HCT116 (cell line): ENCODE measurements at regions of chr9 and their contacts with region 1.

Region 1: GRCh38 chr9:128927731-128928411 is 7.1 kb downstream of the PHYHD1 start:
- DNase-seq: peak; percentile 42
- ATAC-seq: peak; percentile 93
- H3K4me3 ChIP-seq: no peak overlapping the region
- H3K27ac ChIP-seq: no peak overlapping the region
- H3K4me1 ChIP-seq: peaks cover 4 to 10% of the 10 kb centered on the region in 2 experiments; a peak in 3 of 4 replicates
- H3K27me3 ChIP-seq: no peaks in the 10 kb centered on the region
- CTCF ChIP-seq: peak; percentile 88 to 97 (median 94)
- POLR2A ChIP-seq: no peak
- RAD21 ChIP-seq: peak; percentile 98

Region 2: DNA sequence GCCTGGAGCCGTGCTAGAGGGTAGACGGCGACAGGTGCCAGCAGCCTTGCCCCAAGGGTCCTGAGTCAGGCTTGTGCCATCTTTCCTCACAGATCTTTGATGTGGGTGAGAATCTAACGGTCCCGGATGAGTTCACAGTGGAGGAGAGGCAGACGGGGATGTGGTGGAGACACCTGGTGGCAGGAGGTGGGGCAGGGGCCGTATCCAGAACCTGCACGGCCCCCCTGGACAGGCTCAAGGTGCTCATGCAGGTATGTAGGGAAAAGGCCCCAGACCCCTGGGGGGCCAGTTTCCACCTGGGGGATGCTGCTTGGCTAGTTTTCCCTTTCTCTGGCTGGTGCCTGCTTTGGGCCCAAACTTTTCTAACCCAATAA is 824.3 kb before region 1 on chr9:
- CTCF ChIA-PET with region 1: no interaction called
- POLR2A ChIA-PET with region 1: no interaction called
- RAD21 ChIA-PET with region 1: no interaction called
- intact Hi-C with region 1: no loop called
- DNase-seq: no peak
- ATAC-seq: peak; percentile 54; the same call in 1 of the 2 replicates
- H3K4me3 ChIP-seq: no peak overlapping the region
- H3K27ac ChIP-seq: no peak overlapping the region
- H3K4me1 ChIP-seq: peaks cover 8 to 13% of the 10 kb centered on the region in 2 experiments
- H3K27me3 ChIP-seq: no peaks in the 10 kb centered on the region
- CTCF ChIP-seq: peak; percentile 17 to 46 (median 31); a peak in 4 of 6 replicates
- POLR2A ChIP-seq: no peak
- RAD21 ChIP-seq: peak; percentile 50

Region 3: GRCh38 chr9:128643519-128644300 is 284.2 kb before region 1 on chr9:
- CTCF ChIA-PET with region 1: interaction called, 3 read pairs
- POLR2A ChIA-PET with region 1: no interaction called
- RAD21 ChIA-PET with region 1: no interaction called
- intact Hi-C with region 1: loop called (anchors 5 kb)
- DNase-seq: no peak
- ATAC-seq: 0 out of 2 replicates have a peak, but pooled peaks have one; percentile 16
- H3K4me3 ChIP-seq: no peak overlapping the region
- H3K27ac ChIP-seq: no peak overlapping the region
- H3K4me1 ChIP-seq: peaks cover 10 to 23% of the 10 kb centered on the region in 2 experiments; a peak in 3 of 4 replicates
- H3K27me3 ChIP-seq: no peaks in the 10 kb centered on the region
- CTCF ChIP-seq: no peak
- POLR2A ChIP-seq: no peak
- RAD21 ChIP-seq: no peak

Region 4: DNA sequence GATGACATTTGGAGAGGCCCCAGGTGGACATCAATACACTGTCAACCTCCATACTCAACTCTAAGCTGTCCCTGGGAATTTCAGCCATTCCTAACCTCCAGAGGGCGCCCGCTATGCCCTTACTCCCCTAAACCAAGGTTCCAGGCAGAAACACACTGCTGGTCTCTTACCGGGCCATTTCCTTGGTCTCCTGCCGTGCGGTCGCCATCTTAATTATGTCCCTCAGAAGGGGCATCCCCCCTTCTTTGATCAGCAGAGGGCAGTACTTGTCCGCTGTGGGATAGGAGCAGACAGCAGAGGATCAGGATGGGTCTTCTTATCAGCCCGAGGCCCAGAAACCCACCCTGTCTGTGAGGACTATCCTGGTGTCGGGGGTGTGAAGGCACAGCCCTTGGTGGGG is 194.6 kb before region 1 on chr9:
- CTCF ChIA-PET with region 1: interaction called, 11 read pairs
- POLR2A ChIA-PET with region 1: no interaction called
- RAD21 ChIA-PET with region 1: no interaction called
- intact Hi-C with region 1: loop called (anchors 1 kb)
- DNase-seq: peak; percentile 93
- ATAC-seq: peak; percentile 94
- H3K4me3 ChIP-seq: no peak overlapping the region
- H3K27ac ChIP-seq: peak overlapping the region; percentile 18
- H3K4me1 ChIP-seq: peaks cover 0 to 10% of the 10 kb centered on the region in 2 experiments; a peak in 1 of 4 replicates
- H3K27me3 ChIP-seq: no peaks in the 10 kb centered on the region
- CTCF ChIP-seq: peak in 2 of 3 experiments; percentile 90 to 92; a peak in 4 of 6 replicates
- POLR2A ChIP-seq: no peak
- RAD21 ChIP-seq: no peak

Region 5: GRCh38 chr9:128846680-128847030 is 81.2 kb before region 1 on chr9:
- CTCF ChIA-PET with region 1: interaction called, 10 read pairs
- POLR2A ChIA-PET with region 1: no interaction called
- RAD21 ChIA-PET with region 1: interaction called in 1 of 2 experiments, 3 read pairs
- intact Hi-C with region 1: no loop called
- DNase-seq: no peak
- ATAC-seq: no peak
- H3K4me3 ChIP-seq: no peak overlapping the region
- H3K27ac ChIP-seq: no peak overlapping the region
- H3K4me1 ChIP-seq: no peaks in the 10 kb centered on the region
- H3K27me3 ChIP-seq: no peaks in the 10 kb centered on the region
- CTCF ChIP-seq: no peak
- POLR2A ChIP-seq: no peak
- RAD21 ChIP-seq: no peak

Region 6: DNA sequence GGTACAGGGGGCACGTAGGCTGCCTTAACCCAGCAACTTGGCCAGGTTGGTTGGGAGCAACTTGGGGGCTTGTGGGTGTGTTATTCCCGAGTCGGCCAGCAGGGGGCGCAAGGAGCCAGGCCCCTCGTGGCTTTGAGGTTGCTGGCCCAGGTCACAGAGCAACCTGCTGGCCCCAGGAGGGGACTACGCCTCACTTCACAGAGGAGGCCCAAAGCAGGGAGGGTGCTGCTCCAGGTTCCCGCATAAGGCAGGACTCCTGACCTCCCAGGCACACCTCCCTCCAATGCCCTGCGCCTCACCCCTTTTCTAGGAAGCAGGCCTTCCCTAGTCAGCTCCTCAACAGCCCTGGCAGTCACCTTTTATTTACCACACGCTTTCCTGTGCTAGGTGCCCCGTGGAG is 64.2 kb before region 1 on chr9:
- CTCF ChIA-PET with region 1: interaction called, 20 read pairs
- POLR2A ChIA-PET with region 1: no interaction called
- RAD21 ChIA-PET with region 1: no interaction called
- intact Hi-C with region 1: loop called (anchors 1 kb)
- DNase-seq: peak; percentile 48
- ATAC-seq: peak; percentile 94
- H3K4me3 ChIP-seq: no peak overlapping the region
- H3K27ac ChIP-seq: peak overlapping the region; percentile 15; the same call in 1 of the 2 replicates
- H3K4me1 ChIP-seq: peaks cover 2 to 7% of the 10 kb centered on the region in 2 experiments; a peak in 3 of 4 replicates
- H3K27me3 ChIP-seq: no peaks in the 10 kb centered on the region
- CTCF ChIP-seq: peak; percentile 87 to 94 (median 94)
- POLR2A ChIP-seq: no peak
- RAD21 ChIP-seq: peak; percentile 88

Region 7: GRCh38 chr9:129013674-129014504 is 86.0 kb after region 1 on chr9:
- CTCF ChIA-PET with region 1: no interaction called
- POLR2A ChIA-PET with region 1: no interaction called
- RAD21 ChIA-PET with region 1: no interaction called
- intact Hi-C with region 1: no loop called
- DNase-seq: no peak
- ATAC-seq: no peak
- H3K4me3 ChIP-seq: no peak overlapping the region
- H3K27ac ChIP-seq: no peak overlapping the region
- H3K4me1 ChIP-seq: no peaks in the 10 kb centered on the region
- H3K27me3 ChIP-seq: no peaks in the 10 kb centered on the region
- CTCF ChIP-seq: no peak
- POLR2A ChIP-seq: no peak
- RAD21 ChIP-seq: no peak